Heart left ventricle (tissue), 16 donors: ENCODE measurements at regions of chr2 and their contacts with region 1.

Region 1: GRCh38 chr2:71798266-71799012 is 345.1 kb downstream of the DYSF start:
- DNase-seq: peak in 2 of 5 donors; percentile 22 to 33
- ATAC-seq: peak in 3 of 4 donors; percentile 35 to 65 (median 56)
- H3K4me3 ChIP-seq: no peak overlapping the region
- H3K27ac ChIP-seq: no peak overlapping the region
- H3K4me1 ChIP-seq: peaks cover 0 to 19% (median 1%) of the 10 kb centered on the region in 12 donors
- H3K27me3 ChIP-seq: no peaks in the 10 kb centered on the region
- CTCF ChIP-seq: peak; percentile 67 to 84 (median 74)
- POLR2A ChIP-seq: no peak

Region 2: GRCh38 chr2:71558300-71559051 is 240.0 kb before region 1 on chr2:
- intact Hi-C with region 1: loop called in 2 of 10 experiments (anchors 10 kb)
- DNase-seq: peak in 2 of 5 donors; percentile 7 to 28
- ATAC-seq: peak in 3 of 4 donors; percentile 39 to 55 (median 43)
- H3K4me3 ChIP-seq: no peak overlapping the region
- H3K27ac ChIP-seq: no peak overlapping the region
- H3K4me1 ChIP-seq: peaks cover 0 to 5% (median 0%) of the 10 kb centered on the region in 12 donors
- H3K27me3 ChIP-seq: no peaks in the 10 kb centered on the region
- CTCF ChIP-seq: no peak
- POLR2A ChIP-seq: no peak

Region 3: GRCh38 chr2:71620116-71620515 is 178.3 kb before region 1 on chr2:
- intact Hi-C with region 1: no loop called
- DNase-seq: peak in 2 of 5 donors; percentile 1 to 10
- ATAC-seq: no peak
- H3K4me3 ChIP-seq: no peak overlapping the region
- H3K27ac ChIP-seq: no peak overlapping the region
- H3K4me1 ChIP-seq: peaks cover 8 to 29% (median 25%) of the 10 kb centered on the region in 12 donors
- H3K27me3 ChIP-seq: no peaks in the 10 kb centered on the region
- CTCF ChIP-seq: no peak
- POLR2A ChIP-seq: no peak

Region 4: GRCh38 chr2:71685078-71685848 is 113.2 kb before region 1 on chr2:
- intact Hi-C with region 1: loop called in 8 of 10 experiments (anchors 5 to 10 kb)
- DNase-seq: peak in 2 of 5 donors; percentile 20 to 57
- ATAC-seq: peak; percentile 40 to 66 (median 60)
- H3K4me3 ChIP-seq: no peak overlapping the region
- H3K27ac ChIP-seq: peak overlapping the region in 5 of 12 donors; percentile 13 to 76 (median 48)
- H3K4me1 ChIP-seq: peaks cover 0 to 36% (median 0%) of the 10 kb centered on the region in 12 donors
- H3K27me3 ChIP-seq: no peaks in the 10 kb centered on the region
- CTCF ChIP-seq: no peak
- POLR2A ChIP-seq: no peak

Region 5: GRCh38 chr2:71889991-71890684 is 91.7 kb after region 1 on chr2:
- intact Hi-C with region 1: no loop called
- DNase-seq: peak in 2 of 5 donors; percentile 46 to 61
- ATAC-seq: peak in 3 of 4 donors; percentile 13 to 92 (median 86)
- H3K4me3 ChIP-seq: no peak overlapping the region
- H3K27ac ChIP-seq: no peak overlapping the region
- H3K4me1 ChIP-seq: peaks cover 0 to 5% (median 0%) of the 10 kb centered on the region in 12 donors
- H3K27me3 ChIP-seq: no peaks in the 10 kb centered on the region
- CTCF ChIP-seq: no peak
- POLR2A ChIP-seq: no peak

Region 6: GRCh38 chr2:71923887-71924533 is 125.6 kb after region 1 on chr2:
- intact Hi-C with region 1: loop called in 2 of 10 experiments (anchors 5 to 10 kb)
- DNase-seq: peak in 3 of 5 donors; percentile 53 to 68 (median 59)
- ATAC-seq: peak; percentile 37 to 83 (median 74)
- H3K4me3 ChIP-seq: no peak overlapping the region
- H3K27ac ChIP-seq: no peak overlapping the region
- H3K4me1 ChIP-seq: no peaks in the 10 kb centered on the region
- H3K27me3 ChIP-seq: no peaks in the 10 kb centered on the region
- CTCF ChIP-seq: peak; percentile 77 to 87 (median 84)
- POLR2A ChIP-seq: no peak

Region 7: DNA sequence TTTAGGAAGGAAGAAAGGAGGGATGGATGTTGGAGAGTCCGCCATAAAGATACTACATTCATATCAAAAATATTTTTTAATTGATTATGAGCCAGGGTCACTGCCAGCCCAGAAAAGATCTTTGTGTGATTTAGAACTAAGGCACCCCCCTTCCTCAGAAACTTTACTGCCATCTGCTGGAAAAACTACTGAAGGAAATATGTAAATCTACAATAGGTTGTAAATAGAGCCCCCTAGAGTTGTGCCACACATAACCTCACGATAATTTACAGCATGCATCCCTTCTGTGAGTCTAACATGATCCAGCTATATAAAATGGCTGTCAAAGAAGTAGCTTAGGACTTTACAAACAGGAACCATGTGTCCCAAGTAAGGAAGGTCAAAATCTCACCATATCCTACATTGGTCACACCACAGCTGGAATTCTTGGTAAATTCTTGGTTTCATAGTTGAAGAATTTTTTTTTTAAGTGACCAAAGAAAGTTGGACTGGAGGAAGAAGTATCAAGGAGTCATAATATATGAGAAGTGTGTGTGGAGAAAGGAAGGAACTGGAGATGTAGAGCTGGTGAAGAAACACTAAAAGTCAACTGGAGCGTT is 196.7 kb after region 1 on chr2:
- intact Hi-C with region 1: loop called in 7 of 10 experiments (anchors 5 to 10 kb)
- DNase-seq: no peak
- ATAC-seq: no peak
- H3K4me3 ChIP-seq: no peak overlapping the region
- H3K27ac ChIP-seq: no peak overlapping the region
- H3K4me1 ChIP-seq: no peaks in the 10 kb centered on the region
- H3K27me3 ChIP-seq: peaks cover 0 to 9% (median 0%) of the 10 kb centered on the region in 9 donors
- CTCF ChIP-seq: peak in 10 of 12 donors; percentile 9 to 53 (median 36)
- POLR2A ChIP-seq: no peak